Activated B cell treated with CpG ODN at 0.5 μM for 24 hours (primary cell): ENCODE measurements at regions of chr6 and their contacts with region 1.

Region 1: GRCh38 chr6:69827276-69827893 is 30.6 kb upstream of the LMBRD1 start:
- DNase-seq: no peak
- ATAC-seq: no peak
- H3K4me3 Mint-ChIP-seq: no peak overlapping the region
- H3K27ac Mint-ChIP-seq: no peak overlapping the region
- H3K4me1 Mint-ChIP-seq: no peaks in the 10 kb centered on the region
- H3K27me3 Mint-ChIP-seq: no peaks in the 10 kb centered on the region
- CTCF ChIP-seq: no peak

Region 2: GRCh38 chr6:69813508-69813907 is 13.9 kb before region 1 on chr6:
- CTCF ChIA-PET with region 1: interaction called, 4 read pairs
- POLR2A ChIA-PET with region 1: no interaction called
- intact Hi-C with region 1: loop called (anchors 1 kb)
- DNase-seq: no peak
- ATAC-seq: peak; percentile 56
- H3K4me3 Mint-ChIP-seq: peak overlapping the region; percentile 56
- H3K27ac Mint-ChIP-seq: peak overlapping the region; percentile 97
- H3K4me1 Mint-ChIP-seq: peaks cover 79% of the 10 kb centered on the region
- H3K27me3 Mint-ChIP-seq: no peaks in the 10 kb centered on the region
- CTCF ChIP-seq: no peak

Region 3: DNA sequence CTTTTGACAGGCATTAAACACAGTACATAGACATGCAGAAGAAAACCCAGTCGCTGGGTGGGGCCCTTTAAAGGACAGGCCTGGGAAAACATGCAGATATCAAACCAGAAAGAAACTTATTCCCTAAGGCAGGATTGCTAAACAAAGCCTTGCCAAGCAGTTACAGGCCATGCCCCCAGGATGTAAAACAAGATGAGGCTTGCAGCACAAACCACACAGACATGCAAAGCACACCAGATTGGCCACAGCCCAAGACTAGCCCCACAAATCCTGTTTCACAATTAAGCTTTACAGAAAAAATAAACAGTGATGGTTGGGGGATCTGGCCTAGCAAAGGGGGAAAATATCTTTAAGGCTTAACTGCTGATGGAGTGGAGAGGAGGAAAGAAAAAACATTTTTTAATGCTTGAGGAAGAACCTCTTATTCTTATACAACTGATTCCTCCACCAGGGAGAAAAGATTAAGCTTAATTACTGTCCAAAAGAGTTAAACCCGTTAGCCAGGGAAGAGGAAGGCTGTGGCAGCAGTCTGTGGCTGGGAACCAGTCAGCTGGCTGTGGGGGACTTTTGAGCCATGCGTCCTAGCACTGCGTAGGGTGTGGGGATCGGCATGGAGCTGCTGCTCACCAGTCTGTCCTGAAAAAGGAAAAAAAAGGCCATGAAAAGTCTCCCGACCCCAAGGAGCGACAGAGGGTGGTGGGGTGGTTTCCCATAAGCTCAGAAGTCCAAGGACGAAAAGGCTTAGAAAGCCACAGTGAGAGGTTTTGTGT is 67.4 kb after region 1 on chr6:
- CTCF ChIA-PET with region 1: no interaction called
- POLR2A ChIA-PET with region 1: no interaction called
- intact Hi-C with region 1: no loop called
- DNase-seq: no peak
- ATAC-seq: peak; percentile 49
- H3K4me3 Mint-ChIP-seq: peak overlapping the region; percentile 32
- H3K27ac Mint-ChIP-seq: peak overlapping the region; percentile 71
- H3K4me1 Mint-ChIP-seq: peaks cover 57% of the 10 kb centered on the region
- H3K27me3 Mint-ChIP-seq: no peaks in the 10 kb centered on the region
- CTCF ChIP-seq: no peak